ENCODE measurements at regions of chr20 and their contacts with region 1.

Region 1: GRCh38 chr20:10434467-10434831 is 427 bp upstream of the MKKS start:
- DNase-seq: peak; percentile 84 to 98 (median 93)

Region 2: GRCh38 chr20:10219452-10219791 is 215.0 kb before region 1 on chr20:
- intact Hi-C with region 1: loop called (anchors 5 kb)
- DNase-seq: peak; percentile 48 to 92 (median 82)

Measured in head of caudate nucleus (tissue), 42 donors.